RWPE1 (cell line): ENCODE measurements at regions of chr10 and their contacts with region 1.

Region 1: DNA sequence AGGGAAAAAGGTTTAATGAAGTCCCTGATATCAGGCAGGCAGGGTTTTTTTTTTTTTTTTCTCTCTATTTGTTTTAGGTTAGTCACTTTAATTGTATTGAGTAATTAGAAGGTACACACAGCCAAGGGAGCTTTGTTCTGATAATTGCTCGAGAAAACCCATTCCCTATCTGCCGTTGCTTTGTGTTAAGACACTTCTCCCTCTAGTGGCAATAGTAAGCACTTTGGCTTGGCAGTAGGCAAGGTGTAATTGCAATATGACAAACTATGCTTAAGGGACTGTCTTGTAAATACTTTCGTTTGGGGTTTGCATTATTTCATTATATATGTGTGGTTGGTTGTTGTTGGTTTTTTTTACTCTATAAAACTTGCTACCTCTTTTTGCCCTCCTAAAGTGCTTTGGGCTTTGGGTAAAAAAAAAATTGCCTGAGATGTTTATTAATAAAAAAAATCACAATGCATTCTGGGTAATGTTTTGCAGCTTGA is 113.4 kb downstream of the BTRC start:
- DNase-seq: peak; percentile 72
- H3K27ac ChIP-seq: no peak overlapping the region
- CTCF ChIP-seq: peak; percentile 91

Region 2: GRCh38 chr10:101297901-101298486 is 169.3 kb before region 1 on chr10:
- CTCF ChIA-PET with region 1: interaction called, 12 read pairs
- POLR2A ChIA-PET with region 1: no interaction called
- DNase-seq: peak; percentile 73
- H3K27ac ChIP-seq: no peak overlapping the region
- CTCF ChIP-seq: peak; percentile 84

Region 3: GRCh38 chr10:101385866-101386658 is 81.3 kb before region 1 on chr10:
- CTCF ChIA-PET with region 1: no interaction called
- POLR2A ChIA-PET with region 1: no interaction called
- DNase-seq: no peak
- H3K27ac ChIP-seq: no peak overlapping the region
- CTCF ChIP-seq: no peak

Region 4: DNA sequence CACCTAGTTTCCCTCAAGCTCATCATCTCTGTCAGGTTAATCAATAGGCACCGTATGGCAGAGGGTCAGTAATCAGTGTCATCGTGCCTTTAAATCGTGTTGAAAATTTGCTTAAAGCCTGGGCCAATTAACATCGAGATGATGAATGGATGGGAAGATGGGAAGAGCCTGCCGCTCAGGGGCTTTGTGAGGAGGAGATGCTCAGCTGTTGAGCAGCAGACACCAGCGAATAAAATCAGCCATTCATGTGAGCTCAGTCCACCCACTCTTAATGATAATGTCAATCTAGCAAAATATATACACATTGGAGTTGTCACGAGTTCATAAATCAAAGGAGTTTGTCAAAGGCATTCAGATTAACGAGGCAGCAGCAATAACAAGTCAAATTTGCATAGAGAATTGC is 15.7 kb before region 1 on chr10:
- CTCF ChIA-PET with region 1: interaction called, 24 read pairs
- POLR2A ChIA-PET with region 1: no interaction called
- DNase-seq: no peak
- H3K27ac ChIP-seq: no peak overlapping the region
- CTCF ChIP-seq: no peak

Region 5: DNA sequence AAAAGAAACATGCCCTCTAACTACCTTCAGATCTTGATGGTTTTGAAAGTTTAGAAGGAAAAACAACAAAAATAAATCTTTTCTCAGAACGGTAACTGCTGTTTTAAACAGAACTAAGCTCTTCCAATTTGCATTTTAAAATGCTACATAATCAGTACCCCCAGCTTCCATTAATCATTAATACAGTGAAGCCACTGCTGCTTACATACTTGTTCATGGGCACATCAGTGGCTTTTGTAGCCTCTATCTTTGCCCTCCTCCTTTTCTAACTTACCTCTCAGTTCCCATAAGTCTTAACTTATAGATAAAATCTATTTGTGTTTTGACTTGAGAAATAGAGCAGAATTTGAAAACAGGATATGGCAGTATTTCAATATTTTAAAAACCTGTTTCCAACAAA is 11.6 kb after region 1 on chr10:
- CTCF ChIA-PET with region 1: interaction called, 23 read pairs
- POLR2A ChIA-PET with region 1: no interaction called
- DNase-seq: no peak
- H3K27ac ChIP-seq: no peak overlapping the region
- CTCF ChIP-seq: no peak

Region 6: GRCh38 chr10:101569838-101570766 is 102.8 kb after region 1 on chr10:
- CTCF ChIA-PET with region 1: interaction called, 11 read pairs
- POLR2A ChIA-PET with region 1: no interaction called
- DNase-seq: peak; percentile 88
- H3K27ac ChIP-seq: peak overlapping the region; percentile 8
- CTCF ChIP-seq: peak; percentile 81

Region 7: GRCh38 chr10:101587725-101588653 is 120.7 kb after region 1 on chr10 and contains the starts of genes DPCD and POLL:
- CTCF ChIA-PET with region 1: no interaction called
- POLR2A ChIA-PET with region 1: no interaction called
- DNase-seq: peak; percentile 98
- H3K27ac ChIP-seq: peak within 1 kb of the TSS; percentile 62
- CTCF ChIP-seq: no peak